ENCODE measurements at regions of chr4 and their contacts with region 1.

Region 1: DNA sequence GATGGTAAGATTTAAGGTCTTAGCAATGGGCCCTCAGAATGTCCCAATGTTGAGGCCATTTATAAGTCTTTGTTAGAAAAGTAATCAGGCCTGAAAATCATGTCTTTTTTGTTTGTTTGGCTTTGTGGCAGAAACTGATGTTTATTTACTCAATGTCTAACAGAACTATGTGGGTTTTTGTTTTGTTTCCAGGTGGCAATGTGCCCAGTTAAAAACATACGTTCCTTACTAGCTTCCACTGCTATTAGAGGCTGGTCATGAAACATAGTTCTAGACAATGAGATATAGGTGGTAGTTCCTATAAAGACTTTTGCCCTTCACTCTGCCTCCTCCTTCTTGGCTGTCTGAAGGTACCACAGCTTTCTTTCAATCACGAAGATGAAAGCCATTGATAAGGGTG is 108.8 kb downstream of the C4orf51 start:
- DNase-seq: no peak
- CTCF ChIP-seq: no peak

Region 2: DNA sequence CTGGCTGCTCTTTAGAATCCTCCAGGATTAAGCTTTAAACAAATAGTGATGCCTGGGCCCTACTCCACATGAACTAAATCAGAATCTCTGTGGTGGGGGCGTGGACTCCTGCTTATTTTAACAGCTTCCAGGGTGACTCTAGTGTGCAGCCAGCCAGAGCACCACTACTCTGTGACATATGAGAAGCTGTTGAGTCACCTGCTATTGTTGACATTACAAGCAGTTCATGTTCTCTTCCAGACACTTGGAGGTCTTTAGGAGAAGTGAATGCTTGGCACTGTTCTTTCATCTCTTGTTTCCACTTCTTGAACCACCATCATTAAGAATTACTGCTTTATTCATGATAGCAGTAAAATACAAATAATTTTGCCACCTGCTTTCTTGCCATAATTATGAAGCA is 109.2 kb before region 1 on chr4:
- CTCF ChIA-PET with region 1: no interaction called
- POLR2A ChIA-PET with region 1: no interaction called
- DNase-seq: no peak
- CTCF ChIP-seq: no peak

Region 3: DNA sequence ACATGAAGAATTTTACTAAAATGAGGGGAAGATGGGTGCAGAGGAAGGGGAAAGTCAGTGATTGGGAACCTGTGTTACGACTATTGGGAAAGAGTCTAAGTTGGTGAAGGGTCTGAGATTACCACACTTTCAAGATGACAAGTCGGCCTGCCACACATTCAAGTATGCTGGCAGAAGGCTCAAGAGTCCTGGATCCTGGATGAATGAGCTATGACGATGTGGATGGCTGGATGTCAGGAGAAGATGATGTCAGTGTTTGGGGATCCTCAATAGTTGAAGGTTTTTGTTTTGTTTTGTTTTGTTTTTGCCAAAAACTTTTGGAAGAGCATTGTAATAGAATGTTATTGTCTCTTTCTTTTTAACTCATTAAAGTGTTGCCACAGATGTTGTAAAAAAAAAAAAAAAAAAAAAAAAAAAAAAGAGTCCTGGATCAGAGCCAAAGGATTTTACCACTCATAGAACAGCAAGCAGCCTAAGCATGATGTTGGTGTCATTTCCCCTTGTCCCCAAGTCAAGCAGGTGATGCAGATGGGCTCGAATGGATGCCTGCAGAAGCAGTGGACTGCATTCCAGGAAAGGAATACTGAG is 546.2 kb after region 1 on chr4:
- CTCF ChIA-PET with region 1: no interaction called
- POLR2A ChIA-PET with region 1: interaction called, 11 read pairs
- DNase-seq: no peak
- CTCF ChIP-seq: no peak